Caco-2 (cell line): ENCODE measurements at regions of chr12 and their contacts with region 1.

Region 1: GRCh38 chr12:835754-836518 is 83.6 kb downstream of the WNK1 start:
- DNase-seq: no peak
- H3K4me3 ChIP-seq: no peak overlapping the region
- H3K4me3 Mint-ChIP-seq: no peak overlapping the region
- H3K27ac Mint-ChIP-seq: no peak overlapping the region
- H3K4me1 ChIP-seq: no peaks in the 10 kb centered on the region
- H3K4me1 Mint-ChIP-seq: no peaks in the 10 kb centered on the region
- H3K27me3 ChIP-seq: no peaks in the 10 kb centered on the region
- H3K27me3 Mint-ChIP-seq: no peaks in the 10 kb centered on the region
- CTCF ChIP-seq: no peak

Region 2: GRCh38 chr12:617304-617915 is 218.5 kb before region 1 on chr12:
- CTCF ChIA-PET with region 1: no interaction called
- POLR2A ChIA-PET with region 1: no interaction called
- intact Hi-C with region 1: no loop called
- DNase-seq: peak in 1 of 2 experiments; percentile 64
- H3K4me3 ChIP-seq: no peak overlapping the region
- H3K4me3 Mint-ChIP-seq: no peak overlapping the region
- H3K27ac Mint-ChIP-seq: peak overlapping the region; percentile 9
- H3K4me1 ChIP-seq: peaks cover 7% of the 10 kb centered on the region; the same call in 1 of the 2 replicates
- H3K4me1 Mint-ChIP-seq: peaks cover 8% of the 10 kb centered on the region
- H3K27me3 ChIP-seq: no peaks in the 10 kb centered on the region
- H3K27me3 Mint-ChIP-seq: no peaks in the 10 kb centered on the region
- CTCF ChIP-seq: no peak

Region 3: DNA sequence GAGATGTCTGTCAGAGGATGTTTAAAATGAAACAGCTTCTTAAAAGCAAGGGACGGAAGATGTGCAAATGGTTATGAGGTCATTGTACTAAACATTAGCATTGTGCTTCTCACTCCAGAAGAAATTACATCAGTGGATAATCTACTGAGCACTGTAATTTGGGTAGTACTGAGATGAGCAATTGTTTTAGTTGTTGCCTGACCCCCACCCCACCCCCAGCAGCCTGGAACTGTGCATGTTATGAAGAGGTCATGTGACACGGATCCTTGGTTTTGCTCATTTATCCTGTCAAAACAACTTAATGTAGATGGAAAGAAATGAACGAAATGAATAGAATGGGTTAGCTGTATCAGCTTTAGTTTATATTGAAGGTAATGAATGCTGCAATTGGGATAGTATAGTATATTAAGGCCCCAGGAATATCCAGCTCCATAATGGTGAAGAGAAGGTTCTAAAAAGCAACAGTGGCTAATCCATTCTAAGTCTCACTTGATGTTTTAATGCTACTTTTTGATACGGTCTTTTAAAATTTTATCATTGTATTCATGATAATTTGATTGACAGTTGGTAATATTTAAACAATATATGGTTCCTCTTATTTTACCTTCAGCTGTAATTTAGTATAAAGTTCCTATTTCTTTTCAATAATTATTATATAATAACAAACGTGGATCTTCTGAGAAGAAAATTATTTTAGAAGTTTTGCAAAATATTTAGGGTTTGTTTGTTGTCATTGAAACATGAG is 25.1 kb before region 1 on chr12:
- CTCF ChIA-PET with region 1: no interaction called
- POLR2A ChIA-PET with region 1: no interaction called
- intact Hi-C with region 1: no loop called
- DNase-seq: no peak
- H3K4me3 ChIP-seq: no peak overlapping the region
- H3K4me3 Mint-ChIP-seq: no peak overlapping the region
- H3K27ac Mint-ChIP-seq: no peak overlapping the region
- H3K4me1 ChIP-seq: peaks cover 9% of the 10 kb centered on the region
- H3K4me1 Mint-ChIP-seq: peaks cover 17% of the 10 kb centered on the region
- H3K27me3 ChIP-seq: no peaks in the 10 kb centered on the region
- H3K27me3 Mint-ChIP-seq: no peaks in the 10 kb centered on the region
- CTCF ChIP-seq: no peak

Region 4: DNA sequence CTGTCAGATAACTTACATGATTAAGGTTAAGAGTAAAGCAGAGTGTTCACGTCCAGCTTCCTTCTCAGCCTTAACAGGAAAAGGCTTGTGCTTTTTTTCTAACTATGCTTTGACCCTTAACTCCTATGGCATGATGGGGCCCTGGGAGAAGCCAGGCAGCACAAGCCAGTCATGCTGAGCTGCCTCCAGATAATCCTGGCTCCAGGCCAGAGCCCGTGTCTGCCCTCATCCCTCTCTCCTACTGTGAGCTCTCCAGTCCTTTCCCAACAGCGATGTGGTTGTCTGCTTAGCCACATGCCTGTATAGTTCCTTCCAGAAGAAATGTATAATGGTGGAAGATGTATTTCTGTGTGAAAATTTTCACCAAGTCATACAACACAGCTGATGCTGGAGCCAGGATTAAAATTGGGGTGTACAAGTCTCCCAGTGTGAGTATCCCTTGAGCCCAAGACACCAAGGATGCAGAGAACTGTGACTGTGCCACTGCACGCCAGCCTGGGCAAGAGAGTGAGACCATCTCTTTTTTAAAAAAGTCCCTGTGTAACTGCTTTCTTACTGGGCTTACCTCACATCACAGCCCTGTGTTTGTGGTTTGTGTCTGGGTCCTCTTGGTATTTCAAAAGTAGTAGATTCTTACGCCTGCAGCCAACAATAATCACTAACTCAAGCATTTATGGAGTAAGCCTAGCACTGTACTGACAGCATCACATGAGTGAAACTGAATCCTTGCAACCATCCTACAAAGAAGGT is 1968.6 kb after region 1 on chr12:
- CTCF ChIA-PET with region 1: no interaction called
- POLR2A ChIA-PET with region 1: no interaction called
- intact Hi-C with region 1: loop called (anchors 5 kb)
- DNase-seq: no peak
- H3K4me3 ChIP-seq: no peak overlapping the region
- H3K4me3 Mint-ChIP-seq: no peak overlapping the region
- H3K27ac Mint-ChIP-seq: no peak overlapping the region
- H3K4me1 ChIP-seq: no peaks in the 10 kb centered on the region
- H3K4me1 Mint-ChIP-seq: no peaks in the 10 kb centered on the region
- H3K27me3 ChIP-seq: no peaks in the 10 kb centered on the region
- H3K27me3 Mint-ChIP-seq: no peaks in the 10 kb centered on the region
- CTCF ChIP-seq: no peak